ENCODE measurements at regions of chr7 and their contacts with region 1.

Region 1: GRCh38 chr7:151028131-151028947 is at the start of gene ABCB8:
- DNase-seq: peak; percentile 98
- ATAC-seq: peak; percentile 96
- H3K4me3 ChIP-seq: peak within 1 kb of the TSS; percentile 71
- H3K27ac ChIP-seq: peak within 1 kb of the TSS; percentile 65
- H3K4me1 ChIP-seq: no peaks in the 10 kb centered on the region
- H3K27me3 ChIP-seq: peaks cover 4% of the 10 kb centered on the region
- CTCF ChIP-seq: peak; percentile 44
- POLR2A ChIP-seq: peak; percentile 85
- RAD21 ChIP-seq: peak; percentile 33
- total RNA-seq, gene ABCB8: 14.7 and 16.3 TPM in 2 replicates

Region 2: DNA sequence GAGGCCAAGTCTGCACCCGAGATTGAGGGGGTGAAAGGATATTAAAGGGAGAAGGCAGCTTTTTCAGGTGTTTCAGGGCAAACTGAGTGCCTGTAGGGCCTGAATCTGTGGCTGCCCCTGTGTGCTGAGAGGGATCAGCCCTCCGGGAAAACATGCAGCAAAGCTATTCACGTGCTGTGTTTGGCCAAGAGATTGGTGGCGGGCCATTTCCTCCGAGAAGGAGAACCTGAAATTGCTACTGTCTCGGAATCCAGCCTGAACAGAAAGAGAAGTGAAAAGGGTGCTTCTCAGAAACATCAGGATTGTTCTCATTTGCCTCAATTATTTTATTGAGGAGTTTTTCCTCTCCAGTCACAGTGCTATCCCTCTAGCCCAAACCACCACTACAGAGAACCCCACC is 275.1 kb before region 1 on chr7:
- CTCF ChIA-PET with region 1: no interaction called
- POLR2A ChIA-PET with region 1: no interaction called
- dilution Hi-C with region 1: no loop called
- in situ Hi-C with region 1: no loop called
- intact Hi-C with region 1: no loop called
- DNase-seq: no peak
- ATAC-seq: no peak
- H3K4me3 ChIP-seq: no peak overlapping the region
- H3K27ac ChIP-seq: no peak overlapping the region
- H3K4me1 ChIP-seq: no peaks in the 10 kb centered on the region
- H3K27me3 ChIP-seq: no peaks in the 10 kb centered on the region; the same call in 1 of the 2 replicates
- CTCF ChIP-seq: no peak
- POLR2A ChIP-seq: no peak
- RAD21 ChIP-seq: no peak

Region 3: GRCh38 chr7:150830937-150831336 is 197.4 kb before region 1 on chr7:
- CTCF ChIA-PET with region 1: no interaction called
- POLR2A ChIA-PET with region 1: no interaction called
- dilution Hi-C with region 1: no loop called
- in situ Hi-C with region 1: no loop called
- intact Hi-C with region 1: no loop called
- DNase-seq: no peak
- ATAC-seq: no peak
- H3K4me3 ChIP-seq: no peak overlapping the region
- H3K27ac ChIP-seq: no peak overlapping the region
- H3K4me1 ChIP-seq: no peaks in the 10 kb centered on the region
- H3K27me3 ChIP-seq: no peaks in the 10 kb centered on the region; the same call in 1 of the 2 replicates
- CTCF ChIP-seq: no peak
- POLR2A ChIP-seq: no peak
- RAD21 ChIP-seq: no peak

Region 4: GRCh38 chr7:151085691-151086620 is 57.6 kb after region 1 on chr7 and contains the start of gene AGAP3:
- CTCF ChIA-PET with region 1: no interaction called
- POLR2A ChIA-PET with region 1: no interaction called
- dilution Hi-C with region 1: no loop called
- in situ Hi-C with region 1: no loop called
- intact Hi-C with region 1: loop called (anchors 2 kb)
- DNase-seq: peak; percentile 70
- ATAC-seq: peak; percentile 60
- H3K4me3 ChIP-seq: peak within 1 kb of the TSS; percentile 86
- H3K27ac ChIP-seq: peak within 1 kb of the TSS; percentile 98
- H3K4me1 ChIP-seq: peaks cover 35% of the 10 kb centered on the region
- H3K27me3 ChIP-seq: no peaks in the 10 kb centered on the region
- CTCF ChIP-seq: no peak
- POLR2A ChIP-seq: peak; percentile 61
- RAD21 ChIP-seq: no peak
- total RNA-seq, gene AGAP3: 33.3 and 35.3 TPM in 2 replicates